Activated CD4-positive, alpha-beta memory T cell treated with anti-CD3 and anti-CD28 coated beads, Interleukin-2, amount 10 ng/mL, durations not matched to agents 7 days and 5 days (primary cell): ENCODE measurements at regions of chr4 and their contacts with region 1.

Region 1: GRCh38 chr4:173257732-173258717 is 76.1 kb downstream of the HMGB2 start:
- DNase-seq: peak; percentile 59
- H3K4me3 Mint-ChIP-seq: no peak overlapping the region
- H3K27ac Mint-ChIP-seq: no peak overlapping the region
- H3K4me1 Mint-ChIP-seq: no peaks in the 10 kb centered on the region
- H3K27me3 Mint-ChIP-seq: no peaks in the 10 kb centered on the region

Region 2: GRCh38 chr4:173025131-173025530 is 232.9 kb before region 1 on chr4:
- CTCF ChIA-PET with region 1: interaction called, 19 read pairs
- POLR2A ChIA-PET with region 1: no interaction called
- DNase-seq: no peak
- H3K4me3 Mint-ChIP-seq: no peak overlapping the region
- H3K27ac Mint-ChIP-seq: no peak overlapping the region
- H3K4me1 Mint-ChIP-seq: no peaks in the 10 kb centered on the region
- H3K27me3 Mint-ChIP-seq: peaks cover 2% of the 10 kb centered on the region